Activated CD4-positive, alpha-beta memory T cell treated with anti-CD3 and anti-CD28 coated beads for 36 hours (primary cell): ENCODE measurements at regions of chr20 and their contacts with region 1.

Region 1: DNA sequence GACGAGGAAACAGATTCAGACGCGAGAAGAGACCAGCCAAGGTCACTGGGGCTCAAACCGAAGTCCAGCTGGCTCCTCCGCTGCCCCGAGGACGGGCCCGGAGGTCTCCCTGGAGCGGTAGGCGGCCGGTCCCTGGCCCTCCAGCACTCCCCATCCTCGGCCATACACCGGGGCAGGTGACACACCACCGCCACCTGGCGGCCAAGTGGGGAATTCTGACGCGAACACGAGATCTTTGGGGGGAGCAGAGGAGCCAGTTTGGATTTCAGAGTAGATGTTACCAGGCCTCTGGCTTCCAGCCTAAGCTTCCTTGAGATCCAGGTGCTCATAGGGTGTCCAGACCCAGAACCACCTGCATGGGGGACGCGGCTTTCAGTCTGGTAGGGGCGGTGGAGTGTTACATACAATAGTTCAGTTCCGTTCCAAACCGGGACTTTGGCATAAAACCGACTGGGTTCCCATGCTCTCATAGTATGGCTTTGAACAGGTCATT is 16.1 kb downstream of the BPIFB1 start:
- DNase-seq: peak; percentile 80
- H3K4me3 Mint-ChIP-seq: no peak overlapping the region
- H3K27ac Mint-ChIP-seq: no peak overlapping the region
- H3K4me1 Mint-ChIP-seq: no peaks in the 10 kb centered on the region
- H3K27me3 Mint-ChIP-seq: peaks cover 9% of the 10 kb centered on the region

Region 2: GRCh38 chr20:33097001-33097400 is 202.2 kb before region 1 on chr20:
- CTCF ChIA-PET with region 1: interaction called, 4 read pairs
- POLR2A ChIA-PET with region 1: no interaction called
- intact Hi-C with region 1: loop called (anchors 10 kb)
- DNase-seq: no peak
- H3K4me3 Mint-ChIP-seq: no peak overlapping the region
- H3K27ac Mint-ChIP-seq: no peak overlapping the region
- H3K4me1 Mint-ChIP-seq: peaks cover 2% of the 10 kb centered on the region
- H3K27me3 Mint-ChIP-seq: no peaks in the 10 kb centered on the region